Activated T-helper 2 cell treated with anti-CD3 and anti-CD28 coated beads, Interferon-gamma antibody, Interleukin-2, Interleukin-4, amounts not matched to agents 10 μg/mL and 5 μg/mL and 100 μg/mL, durations not matched to agents 14 hours and 24 hours and 36 hours (primary cell): ENCODE measurements at regions of chr5 and their contacts with region 1.

Region 1: GRCh38 chr5:159156426-159157238 is 52.7 kb downstream of the RNF145 start:
- DNase-seq: no peak
- H3K4me3 Mint-ChIP-seq: no peak overlapping the region
- H3K27ac Mint-ChIP-seq: no peak overlapping the region
- H3K4me1 Mint-ChIP-seq: peaks cover 29% of the 10 kb centered on the region
- H3K27me3 Mint-ChIP-seq: peaks cover 1% of the 10 kb centered on the region

Region 2: GRCh38 chr5:158349987-158350386 is 806.6 kb before region 1 on chr5:
- intact Hi-C with region 1: no loop called
- DNase-seq: no peak
- H3K4me3 Mint-ChIP-seq: no peak overlapping the region
- H3K27ac Mint-ChIP-seq: no peak overlapping the region
- H3K4me1 Mint-ChIP-seq: no peaks in the 10 kb centered on the region
- H3K27me3 Mint-ChIP-seq: no peaks in the 10 kb centered on the region

Region 3: DNA sequence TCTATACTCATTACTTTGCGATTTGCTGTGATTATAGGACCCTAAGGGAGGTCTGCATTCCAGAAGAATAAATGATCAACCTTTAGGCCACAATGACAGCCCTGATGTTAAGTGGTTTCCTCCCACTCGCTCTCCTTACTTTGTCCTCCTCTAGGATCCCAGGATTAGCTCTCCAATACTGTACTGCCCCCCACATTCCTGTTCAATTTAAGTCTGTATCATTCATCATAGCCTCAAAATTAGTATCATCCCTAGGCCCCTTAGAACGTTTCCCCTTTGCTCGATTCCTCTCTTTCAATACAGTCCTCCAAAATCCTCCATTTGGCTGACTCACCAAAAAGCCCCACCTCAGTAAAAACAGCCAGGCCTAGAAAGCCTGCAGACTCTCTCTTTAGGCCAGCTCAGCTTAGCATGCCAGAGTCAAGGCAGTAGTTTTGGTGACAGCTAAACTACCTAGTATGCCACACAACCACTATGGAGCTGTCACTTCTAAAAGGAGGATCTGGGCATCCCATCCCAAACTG is 28.3 kb after region 1 on chr5:
- intact Hi-C with region 1: no loop called
- DNase-seq: no peak
- H3K4me3 Mint-ChIP-seq: peak overlapping the region; percentile 9
- H3K27ac Mint-ChIP-seq: peak overlapping the region; percentile 77
- H3K4me1 Mint-ChIP-seq: peaks cover 63% of the 10 kb centered on the region
- H3K27me3 Mint-ChIP-seq: no peaks in the 10 kb centered on the region

Region 4: GRCh38 chr5:159316519-159317383 is 160.1 kb after region 1 on chr5:
- intact Hi-C with region 1: loop called (anchors 1 kb)
- DNase-seq: no peak
- H3K4me3 Mint-ChIP-seq: no peak overlapping the region
- H3K27ac Mint-ChIP-seq: no peak overlapping the region
- H3K4me1 Mint-ChIP-seq: no peaks in the 10 kb centered on the region
- H3K27me3 Mint-ChIP-seq: peaks cover 36% of the 10 kb centered on the region

Region 5: GRCh38 chr5:159412284-159413046 is 255.8 kb after region 1 on chr5:
- intact Hi-C with region 1: loop called (anchors 5 kb)
- DNase-seq: peak; percentile 79
- H3K4me3 Mint-ChIP-seq: no peak overlapping the region
- H3K27ac Mint-ChIP-seq: no peak overlapping the region
- H3K4me1 Mint-ChIP-seq: peaks cover 48% of the 10 kb centered on the region
- H3K27me3 Mint-ChIP-seq: peaks cover 32% of the 10 kb centered on the region